ENCODE measurements at regions of chr18 and their contacts with region 1.

Region 1: DNA sequence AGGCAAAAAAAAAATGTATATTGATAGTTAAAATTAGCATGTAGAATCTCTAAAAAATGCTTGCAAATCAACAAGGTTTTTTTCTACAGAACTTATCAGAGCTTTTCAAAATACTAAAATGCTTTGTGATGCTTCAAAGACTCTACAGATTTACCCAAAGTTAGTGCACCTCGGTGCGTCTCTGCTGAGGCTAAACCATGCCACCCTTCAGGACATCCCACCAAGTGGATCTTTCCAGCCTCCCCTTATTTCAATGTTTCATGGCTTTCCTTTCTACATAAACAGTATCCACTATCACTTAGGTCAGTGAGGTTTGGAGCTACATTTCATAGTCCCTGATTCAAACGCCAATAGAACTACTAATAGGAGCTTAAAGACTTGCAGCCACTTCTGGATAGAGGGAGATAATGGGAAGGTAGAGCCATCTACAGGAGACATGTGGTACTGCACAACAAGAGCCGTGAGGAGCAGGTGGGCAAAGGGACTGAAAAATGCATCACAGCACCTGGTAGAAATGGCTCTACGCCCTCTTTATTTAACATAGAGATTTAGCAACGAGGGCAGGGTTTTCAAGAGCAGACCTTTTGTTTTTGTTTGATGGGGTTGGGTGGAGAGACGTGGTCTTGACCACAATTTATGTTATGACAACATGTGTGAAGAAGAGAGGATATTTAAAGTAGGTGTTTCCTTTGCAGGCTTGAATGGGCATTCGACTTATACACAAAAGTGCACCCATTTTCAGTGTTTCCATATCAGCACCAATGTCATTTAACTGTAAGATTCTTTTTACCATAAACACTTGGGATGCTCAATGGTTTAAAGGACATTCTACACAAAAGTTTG is 56.1 kb upstream of the SLC35G4 start:
- DNase-seq: peak in 26 of 42 donors; percentile 16 to 80 (median 45)

Region 2: DNA sequence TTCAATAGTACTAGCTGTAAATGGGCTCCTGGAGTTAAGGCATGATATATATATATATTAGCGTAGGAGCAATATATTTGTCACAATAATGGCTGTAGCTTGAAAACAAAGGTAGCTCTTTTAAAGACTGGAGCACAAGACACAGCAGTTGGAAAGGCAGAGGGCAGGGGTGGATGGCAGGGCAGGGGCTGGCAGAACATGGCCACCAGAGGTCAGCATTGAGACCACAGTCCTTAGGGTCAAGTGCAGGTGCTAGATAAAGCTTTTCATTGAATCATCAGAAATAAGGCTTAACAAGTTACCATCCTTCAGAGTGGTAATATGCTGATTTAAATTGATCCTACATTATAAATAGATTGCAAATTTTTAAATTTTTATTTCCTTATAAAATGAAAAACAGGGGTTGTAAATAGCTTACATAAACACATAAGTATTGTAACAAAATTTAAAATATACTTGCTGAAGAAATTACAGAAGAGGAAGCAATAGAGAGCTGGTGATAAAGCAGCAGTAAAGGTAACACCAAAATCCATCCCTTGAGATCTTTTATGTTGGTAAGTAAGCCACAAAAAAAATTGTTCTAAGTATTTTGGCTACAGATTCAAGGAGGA is 242.7 kb before region 1 on chr18:
- intact Hi-C with region 1: loop called (anchors 5 kb)
- DNase-seq: peak in 35 of 42 donors; percentile 14 to 83 (median 41)